ENCODE measurements at regions of chr15 and their contacts with region 1.

Region 1: DNA sequence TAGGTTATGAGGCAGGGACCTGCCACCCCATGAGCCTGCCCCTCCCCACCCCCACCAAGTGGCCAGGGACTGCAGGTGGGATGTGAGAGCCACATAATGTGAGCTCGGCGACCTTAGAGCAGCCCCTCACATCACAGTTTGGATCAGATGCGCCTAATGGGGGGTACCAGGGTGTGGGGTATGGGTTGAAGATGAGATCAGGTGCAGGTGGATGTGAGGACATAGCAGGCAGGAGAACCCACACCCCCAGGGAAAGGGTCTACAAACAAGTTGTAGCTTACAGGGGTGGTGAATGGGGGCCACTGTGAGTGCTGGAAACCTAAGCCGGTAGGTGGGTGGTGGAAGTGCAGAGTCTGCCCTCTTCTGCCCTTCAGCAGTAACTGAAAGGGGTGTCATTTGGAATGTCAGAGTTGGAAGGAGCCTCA is 94.0 kb downstream of the CORO2B start:
- DNase-seq: peak in 1 of 3 donors; percentile 28
- ATAC-seq: no peak
- H3K4me3 ChIP-seq: no peak overlapping the region
- H3K27ac ChIP-seq: no peak overlapping the region
- H3K4me1 ChIP-seq: no peaks in the 10 kb centered on the region
- H3K27me3 ChIP-seq: no peaks in the 10 kb centered on the region
- CTCF ChIP-seq: no peak
- POLR2A ChIP-seq: no peak

Region 2: DNA sequence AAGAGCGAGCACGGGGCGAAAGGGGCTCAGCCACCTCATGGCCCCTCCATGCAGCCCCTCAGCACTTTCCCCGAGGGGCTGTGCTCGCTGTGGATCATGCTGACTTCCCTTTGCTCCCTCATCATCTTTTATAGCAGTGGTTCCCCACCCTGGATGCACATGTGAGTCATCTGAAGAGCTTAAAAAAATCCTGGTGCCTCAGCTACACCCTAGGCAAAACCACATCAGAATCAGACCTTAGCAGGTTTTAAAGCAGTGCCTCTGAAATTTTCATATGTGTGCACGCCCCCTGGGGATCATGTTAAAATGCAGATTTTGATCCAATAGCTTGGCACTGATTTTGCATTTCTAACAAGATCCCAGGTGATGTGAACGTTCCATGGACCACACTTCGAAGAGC is 344.4 kb before region 1 on chr15:
- intact Hi-C with region 1: loop called in 1 of 2 experiments (anchors 10 kb)
- DNase-seq: no peak
- ATAC-seq: no peak
- H3K4me3 ChIP-seq: no peak overlapping the region
- H3K27ac ChIP-seq: no peak overlapping the region
- H3K4me1 ChIP-seq: no peaks in the 10 kb centered on the region
- H3K27me3 ChIP-seq: no peaks in the 10 kb centered on the region
- CTCF ChIP-seq: no peak
- POLR2A ChIP-seq: no peak

Region 3: GRCh38 chr15:68559345-68560310 is 113.2 kb before region 1 on chr15:
- intact Hi-C with region 1: loop called in 1 of 2 experiments (anchors 5 kb)
- DNase-seq: peak; percentile 80 to 83 (median 82)
- ATAC-seq: peak; percentile 95 to 98 (median 98)
- H3K4me3 ChIP-seq: peak overlapping the region in 2 of 3 donors; percentile 2 to 28
- H3K27ac ChIP-seq: no peak overlapping the region
- H3K4me1 ChIP-seq: peaks cover 0 to 7% (median 1%) of the 10 kb centered on the region in 4 donors
- H3K27me3 ChIP-seq: no peaks in the 10 kb centered on the region
- CTCF ChIP-seq: peak; percentile 90 to 98 (median 96)
- POLR2A ChIP-seq: no peak

Region 4: GRCh38 chr15:68586274-68586961 is 86.4 kb before region 1 on chr15:
- intact Hi-C with region 1: loop called in 1 of 2 experiments (anchors 10 kb)
- DNase-seq: peak in 1 of 3 donors; percentile 24
- ATAC-seq: peak in 1 of 4 donors; percentile 76
- H3K4me3 ChIP-seq: no peak overlapping the region
- H3K27ac ChIP-seq: no peak overlapping the region
- H3K4me1 ChIP-seq: peaks cover 0 to 5% (median 0%) of the 10 kb centered on the region in 4 donors
- H3K27me3 ChIP-seq: no peaks in the 10 kb centered on the region
- CTCF ChIP-seq: no peak
- POLR2A ChIP-seq: no peak

Measured in right lobe of liver (tissue), 6 donors.